Left cardiac atrium (tissue), 4 donors: ENCODE measurements at regions of chr14 and their contacts with region 1.

Region 1: GRCh38 chr14:78566026-78566858 is 396.1 kb downstream of the NRXN3 start:
- DNase-seq: peak; percentile 73
- ATAC-seq: peak; percentile 97 to 98

Region 2: GRCh38 chr14:77654001-77654441 is 912.2 kb before region 1 on chr14:
- intact Hi-C with region 1: loop called in 1 of 2 experiments (anchors 10 kb)
- DNase-seq: no peak
- ATAC-seq: no peak

Region 3: GRCh38 chr14:77862154-77862786 is 704.0 kb before region 1 on chr14:
- intact Hi-C with region 1: loop called (anchors 2 to 5 kb)
- DNase-seq: peak; percentile 80
- ATAC-seq: peak; percentile 78 to 79

Region 4: GRCh38 chr14:78022059-78022458 is 544.2 kb before region 1 on chr14:
- intact Hi-C with region 1: loop called in 1 of 2 experiments (anchors 5 kb)
- DNase-seq: peak; percentile 46
- ATAC-seq: peak in 1 of 2 donors; percentile 34

Region 5: DNA sequence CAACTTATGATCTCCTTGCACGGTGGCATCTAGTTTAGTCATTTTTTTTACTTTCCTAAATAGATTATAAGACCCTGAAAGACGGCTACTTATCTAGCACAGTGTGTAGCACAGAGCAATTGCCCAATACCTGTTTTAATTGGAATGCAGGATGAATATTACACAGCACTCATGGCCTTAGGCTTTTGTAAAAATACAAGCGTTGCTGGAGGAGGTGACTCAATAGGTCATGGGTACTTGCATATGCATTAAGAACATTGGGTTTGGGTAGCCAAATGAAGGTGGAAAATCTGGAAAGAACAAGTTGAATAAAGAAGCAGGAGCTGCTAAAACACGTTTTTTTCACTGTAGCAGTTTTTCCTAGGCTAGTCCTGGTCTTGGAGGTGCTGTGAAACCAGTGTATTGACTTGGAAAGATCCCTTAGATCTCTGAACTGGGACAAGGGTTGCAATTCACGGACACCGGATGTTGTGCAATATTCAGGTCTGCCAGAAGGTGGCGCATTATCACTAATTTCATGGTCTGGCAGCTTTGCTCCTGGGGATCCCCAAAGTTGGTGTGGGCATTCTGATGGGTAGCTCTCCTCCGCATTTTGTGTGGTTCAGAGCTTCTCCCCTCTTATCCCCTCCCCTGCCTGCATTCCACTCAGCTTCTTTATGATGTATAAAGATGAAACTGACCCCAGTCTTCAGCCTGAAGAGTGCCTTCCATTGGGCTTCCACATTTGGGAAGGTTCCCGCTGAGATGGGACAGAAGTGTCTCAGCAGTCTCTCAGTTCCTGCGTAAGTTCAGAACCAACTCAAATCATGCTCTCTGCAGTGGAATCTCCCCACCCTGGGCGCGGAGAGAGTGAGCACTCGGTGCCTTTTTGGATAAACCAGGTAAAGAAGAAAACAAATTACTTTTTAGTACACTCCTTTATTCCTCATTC is 117.8 kb before region 1 on chr14:
- intact Hi-C with region 1: loop called (anchors 2 to 10 kb)
- DNase-seq: peak; percentile 25
- ATAC-seq: peak in 1 of 2 donors; percentile 61

Region 6: GRCh38 chr14:78455896-78456435 is 110.3 kb before region 1 on chr14:
- intact Hi-C with region 1: loop called in 1 of 2 experiments (anchors 10 kb)
- DNase-seq: no peak
- ATAC-seq: no peak